ENCODE measurements at regions of chr11 and their contacts with region 1.

Region 1: DNA sequence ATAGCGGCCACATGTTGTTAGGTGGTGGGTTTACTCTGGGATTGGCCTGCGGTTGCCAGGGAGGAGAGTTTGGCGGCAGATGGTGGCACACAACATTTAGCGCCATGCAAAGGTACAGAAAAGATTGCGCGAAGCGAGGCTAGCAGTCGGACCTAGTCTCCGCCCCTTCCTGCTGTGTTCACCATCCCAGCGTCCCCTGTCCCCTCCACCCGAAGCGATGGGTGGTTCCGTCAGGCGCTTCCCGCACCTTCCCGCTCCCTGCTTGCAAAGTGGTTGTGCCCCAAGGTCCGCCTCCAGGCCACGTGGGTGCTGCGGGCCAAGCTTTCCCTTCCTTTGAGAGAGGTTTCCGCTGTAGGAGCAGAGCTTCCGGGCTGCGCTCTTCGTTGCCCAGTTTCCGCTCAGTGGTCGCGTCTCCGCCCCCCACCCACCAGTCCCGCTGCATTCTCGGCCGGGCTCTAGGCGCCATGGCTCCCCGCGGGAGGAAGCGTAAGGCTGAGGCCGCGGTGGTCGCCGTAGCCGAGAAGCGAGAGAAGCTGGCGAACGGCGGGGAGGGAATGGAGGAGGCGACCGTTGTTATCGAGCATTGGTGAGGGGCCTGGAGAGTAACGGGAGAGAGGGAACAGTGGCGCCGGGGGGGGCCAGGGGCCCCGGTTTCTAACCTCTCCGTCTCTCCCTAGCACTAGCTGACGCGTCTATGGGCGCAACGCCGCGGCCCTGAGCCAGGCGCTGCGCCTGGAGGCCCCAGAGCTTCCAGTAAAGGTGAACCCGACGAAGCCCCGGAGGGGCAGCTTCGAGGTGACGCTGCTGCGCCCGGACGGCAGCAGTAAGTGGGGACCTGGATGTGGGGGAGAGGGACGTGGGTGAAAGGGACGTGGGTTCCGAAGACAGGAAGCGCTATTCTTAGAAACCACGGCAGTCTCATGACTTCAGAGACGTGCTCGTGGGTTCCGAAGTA is at the start of gene SELENOH:
- DNase-seq: peak; percentile 81 to 96
- ATAC-seq: peak; percentile 84 to 91 (median 86)
- H3K4me3 ChIP-seq: peak within 1 kb of the TSS; percentile 94
- H3K4me3 Mint-ChIP-seq: peak within 1 kb of the TSS; percentile 99
- H3K27ac ChIP-seq: peak within 1 kb of the TSS; percentile 97
- H3K27ac Mint-ChIP-seq: peak within 1 kb of the TSS; percentile 99
- H3K4me1 ChIP-seq: peaks cover 17% of the 10 kb centered on the region
- H3K4me1 Mint-ChIP-seq: peaks cover 18 to 30% of the 10 kb centered on the region in 2 donors
- H3K27me3 ChIP-seq: no peaks in the 10 kb centered on the region
- H3K27me3 Mint-ChIP-seq: no peaks in the 10 kb centered on the region
- CTCF ChIP-seq: no peak
- total RNA-seq, gene SELENOH: 55.3 to 83.3 (median 61.0) TPM

Region 2: DNA sequence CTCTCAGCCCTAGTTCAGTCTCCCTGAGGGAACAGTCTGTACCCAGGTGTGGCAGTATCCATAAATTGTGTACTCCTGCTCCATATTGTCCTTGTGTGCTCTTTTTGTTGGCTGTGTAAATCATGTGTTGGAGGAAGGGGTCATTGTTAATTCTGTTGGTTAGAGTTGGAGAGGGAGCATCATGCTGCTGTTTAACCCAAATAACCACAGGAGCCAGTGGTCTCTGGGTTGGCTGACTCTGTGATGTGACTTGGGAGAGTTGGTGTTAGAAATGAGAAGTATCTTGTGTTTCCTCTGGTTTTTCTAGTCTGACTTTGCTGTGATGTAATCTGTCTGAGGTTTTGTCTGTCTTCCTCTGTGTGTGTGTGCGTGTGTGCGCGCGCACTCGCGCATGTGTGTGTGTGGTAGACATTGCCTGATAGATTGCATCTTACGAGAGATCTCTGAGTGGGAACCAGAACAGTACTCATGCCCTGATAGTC is 50.7 kb after region 1 on chr11:
- intact Hi-C with region 1: loop called (anchors 2 kb)
- DNase-seq: peak; percentile 75 to 95
- ATAC-seq: peak; percentile 92 to 97 (median 93)
- H3K4me3 ChIP-seq: no peak overlapping the region
- H3K4me3 Mint-ChIP-seq: peak overlapping the region; percentile 48
- H3K27ac ChIP-seq: peak overlapping the region; percentile 57
- H3K27ac Mint-ChIP-seq: peak overlapping the region; percentile 86
- H3K4me1 ChIP-seq: peaks cover 30% of the 10 kb centered on the region
- H3K4me1 Mint-ChIP-seq: peaks cover 24 to 31% of the 10 kb centered on the region in 2 donors
- H3K27me3 ChIP-seq: no peaks in the 10 kb centered on the region
- H3K27me3 Mint-ChIP-seq: no peaks in the 10 kb centered on the region
- CTCF ChIP-seq: no peak

Measured in natural killer cell (primary cell).